ENCODE measurements at regions of chr1 and their contacts with region 1.

Region 1: DNA sequence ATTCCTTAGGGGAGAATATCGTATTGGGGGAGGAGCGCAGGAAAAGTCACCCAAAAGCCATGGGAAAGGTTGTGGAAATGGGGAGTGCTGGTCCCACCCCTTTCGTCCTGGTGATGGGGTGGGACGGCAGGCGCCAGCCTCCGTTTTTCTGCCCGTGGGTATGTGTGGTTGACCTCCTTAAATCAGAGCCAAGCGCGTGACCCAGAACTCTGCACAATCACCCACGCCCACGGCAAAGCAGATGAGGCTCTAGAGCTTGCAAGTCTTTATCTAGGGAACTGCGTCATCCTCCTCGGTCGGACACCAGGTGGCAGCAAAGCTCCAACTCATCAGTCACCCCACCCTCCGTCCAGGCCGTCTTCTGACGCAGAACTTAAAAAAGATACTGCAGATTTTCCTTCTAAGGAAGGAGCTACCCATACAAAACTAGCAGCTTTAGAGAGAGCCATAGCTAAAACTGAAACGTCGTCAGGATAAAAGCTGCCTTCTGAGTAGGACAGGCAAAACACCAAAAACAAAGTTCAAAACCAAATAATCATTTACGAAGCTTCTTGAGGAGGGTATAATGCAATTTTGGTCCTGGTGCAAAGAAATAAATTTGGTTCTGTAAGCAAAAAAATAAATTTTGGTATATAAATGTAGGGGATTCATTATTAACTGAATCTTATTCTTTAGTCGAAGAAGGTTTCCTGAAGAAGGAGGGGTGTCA is 62.0 kb downstream of the TBX19 start:
- DNase-seq: peak; percentile 92
- ATAC-seq: peak; percentile 98
- H3K4me3 Mint-ChIP-seq: no peak overlapping the region
- H3K27ac Mint-ChIP-seq: peak overlapping the region; percentile 77
- H3K4me1 Mint-ChIP-seq: peaks cover 62% of the 10 kb centered on the region
- H3K27me3 Mint-ChIP-seq: no peaks in the 10 kb centered on the region

Region 2: GRCh38 chr1:168234846-168235547 is 107.7 kb before region 1 on chr1:
- CTCF ChIA-PET with region 1: interaction called, 82 read pairs
- POLR2A ChIA-PET with region 1: no interaction called
- DNase-seq: peak; percentile 65
- ATAC-seq: peak; percentile 93
- H3K4me3 Mint-ChIP-seq: no peak overlapping the region
- H3K27ac Mint-ChIP-seq: no peak overlapping the region
- H3K4me1 Mint-ChIP-seq: peaks cover 44% of the 10 kb centered on the region
- H3K27me3 Mint-ChIP-seq: no peaks in the 10 kb centered on the region

Region 3: DNA sequence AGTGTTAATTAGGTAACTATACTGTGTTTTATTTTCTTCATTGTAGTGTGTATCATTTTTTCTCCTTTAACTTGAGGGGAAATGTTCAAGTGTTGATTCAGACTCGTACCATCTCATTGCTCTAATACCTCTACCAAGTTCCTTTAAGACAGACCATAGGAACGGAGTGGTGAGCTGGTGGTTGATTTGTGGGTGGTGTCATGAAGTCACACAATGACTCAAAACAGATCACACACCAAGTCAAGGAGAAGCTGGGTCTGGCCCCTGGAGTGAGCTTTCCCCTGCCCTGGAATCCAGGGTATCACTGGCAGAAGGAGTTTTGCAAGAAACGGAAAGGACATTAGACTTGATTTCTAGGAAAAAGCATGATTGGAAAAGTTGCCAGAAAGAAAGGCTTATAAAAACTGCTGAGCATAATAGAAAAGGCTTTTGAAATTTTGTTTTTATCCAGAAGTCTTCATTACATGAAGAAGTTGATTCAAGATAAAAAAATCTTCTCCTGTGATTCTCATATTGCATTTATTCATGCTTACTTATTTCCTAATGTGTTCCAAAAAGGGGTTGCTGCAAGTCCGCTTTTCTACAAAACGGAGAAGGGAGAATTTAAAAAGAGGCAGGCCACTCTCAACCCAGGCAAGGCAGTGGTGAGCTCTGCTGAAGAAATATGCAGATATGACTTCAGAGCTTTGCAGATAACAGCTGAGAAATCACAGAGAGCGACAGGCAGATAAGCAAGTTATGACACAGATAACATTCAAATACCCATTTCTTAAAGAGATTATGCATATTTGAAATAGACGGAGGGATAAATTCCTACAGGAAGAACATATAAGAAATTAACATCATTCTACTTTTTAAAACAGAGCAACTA is 17.7 kb after region 1 on chr1:
- CTCF ChIA-PET with region 1: interaction called, 280 read pairs
- POLR2A ChIA-PET with region 1: interaction called, 7 read pairs
- DNase-seq: peak; percentile 66
- ATAC-seq: peak; percentile 48
- H3K4me3 Mint-ChIP-seq: no peak overlapping the region
- H3K27ac Mint-ChIP-seq: no peak overlapping the region
- H3K4me1 Mint-ChIP-seq: peaks cover 40% of the 10 kb centered on the region
- H3K27me3 Mint-ChIP-seq: peaks cover 2% of the 10 kb centered on the region

Region 4: DNA sequence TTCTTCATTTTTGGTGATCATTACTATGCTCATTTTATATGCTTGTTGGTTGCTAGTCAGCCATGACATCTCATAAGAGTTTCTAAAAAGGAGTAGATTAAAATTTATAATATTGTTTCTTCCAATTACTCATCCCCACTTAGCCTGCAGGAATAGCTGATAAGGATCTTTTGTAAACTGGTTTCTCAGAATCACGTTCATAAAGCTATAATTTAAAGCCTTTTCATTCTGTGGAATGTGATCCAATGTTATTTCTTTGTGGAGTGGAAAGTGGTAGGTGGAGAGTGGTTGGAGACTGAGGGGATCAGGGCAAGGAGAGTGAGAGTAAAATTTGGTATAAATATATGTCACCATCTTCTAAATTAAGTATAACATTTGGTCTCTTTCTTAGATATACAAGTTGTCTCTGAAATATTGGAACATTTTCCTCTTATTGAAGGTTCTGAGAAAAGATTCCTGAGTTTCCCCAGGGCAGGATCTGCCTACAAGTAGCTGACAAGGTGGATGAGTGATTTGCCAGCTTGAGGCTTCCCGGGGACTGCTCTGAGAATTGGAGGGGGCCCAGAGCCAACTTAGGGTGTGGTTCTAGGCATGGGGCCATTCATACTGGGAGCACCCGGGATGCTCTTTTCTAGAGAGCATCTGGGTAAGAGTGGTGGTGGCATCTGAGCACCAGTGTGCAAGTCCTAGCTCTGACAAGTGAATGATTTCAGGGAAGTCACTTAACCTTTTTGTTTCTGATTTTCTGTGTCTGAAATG is 54.4 kb after region 1 on chr1:
- CTCF ChIA-PET with region 1: interaction called, 16 read pairs
- POLR2A ChIA-PET with region 1: no interaction called
- DNase-seq: peak; percentile 14
- ATAC-seq: no peak
- H3K4me3 Mint-ChIP-seq: no peak overlapping the region
- H3K27ac Mint-ChIP-seq: no peak overlapping the region
- H3K4me1 Mint-ChIP-seq: peaks cover 14% of the 10 kb centered on the region
- H3K27me3 Mint-ChIP-seq: peaks cover 16% of the 10 kb centered on the region

Region 5: GRCh38 chr1:168430321-168430720 is 87.6 kb after region 1 on chr1:
- CTCF ChIA-PET with region 1: interaction called, 258 read pairs
- POLR2A ChIA-PET with region 1: no interaction called
- DNase-seq: no peak
- ATAC-seq: no peak
- H3K4me3 Mint-ChIP-seq: no peak overlapping the region
- H3K27ac Mint-ChIP-seq: no peak overlapping the region
- H3K4me1 Mint-ChIP-seq: peaks cover 12% of the 10 kb centered on the region
- H3K27me3 Mint-ChIP-seq: no peaks in the 10 kb centered on the region

Region 6: GRCh38 chr1:168553680-168554553 is 211.2 kb after region 1 on chr1:
- CTCF ChIA-PET with region 1: interaction called, 15 read pairs
- POLR2A ChIA-PET with region 1: no interaction called
- DNase-seq: peak; percentile 41
- ATAC-seq: peak; percentile 47
- H3K4me3 Mint-ChIP-seq: peak overlapping the region; percentile 17
- H3K27ac Mint-ChIP-seq: peak overlapping the region; percentile 77
- H3K4me1 Mint-ChIP-seq: peaks cover 72% of the 10 kb centered on the region
- H3K27me3 Mint-ChIP-seq: no peaks in the 10 kb centered on the region

Region 7: GRCh38 chr1:169546087-169546995 is 1203.6 kb after region 1 on chr1:
- CTCF ChIA-PET with region 1: interaction called, 19 read pairs
- POLR2A ChIA-PET with region 1: no interaction called
- DNase-seq: peak; percentile 77
- ATAC-seq: peak; percentile 93
- H3K4me3 Mint-ChIP-seq: no peak overlapping the region
- H3K27ac Mint-ChIP-seq: no peak overlapping the region
- H3K4me1 Mint-ChIP-seq: no peaks in the 10 kb centered on the region
- H3K27me3 Mint-ChIP-seq: no peaks in the 10 kb centered on the region

Measured in activated CD8-positive, alpha-beta T cell treated with anti-CD3 and anti-CD28 coated beads, Interleukin-2, amount 10 ng/mL, durations not matched to agents 7 days and 5 days (primary cell).